ENCODE measurements at regions of chr6 and their contacts with region 1.

Region 1: DNA sequence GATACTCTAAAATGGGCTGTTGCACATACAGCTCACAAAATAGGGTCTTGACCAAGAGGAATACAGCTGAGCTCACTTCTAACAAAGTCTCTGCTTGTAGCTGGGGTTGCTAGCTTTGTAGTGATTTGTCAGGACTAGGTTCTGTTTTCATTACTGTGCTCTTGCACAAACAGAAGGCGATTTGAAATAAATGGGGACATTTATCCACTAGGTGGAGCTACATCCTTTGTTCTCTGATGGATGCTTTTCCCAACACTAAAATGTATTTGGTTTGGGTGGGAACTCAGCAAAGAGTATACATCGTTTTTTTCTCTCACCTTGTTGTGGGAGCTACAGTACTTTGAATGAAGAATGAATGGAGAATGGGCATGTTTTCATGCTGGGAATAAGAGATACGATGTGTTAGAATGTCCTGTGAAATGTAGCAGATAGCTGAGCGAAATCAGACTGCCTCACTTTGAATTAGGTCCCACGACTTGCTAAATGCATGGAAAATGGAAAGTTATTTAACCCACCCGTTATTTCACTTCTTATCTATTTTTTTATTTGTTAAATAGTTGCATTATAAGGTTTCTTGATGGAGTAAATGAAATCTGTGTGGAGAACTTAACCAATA is 494.7 kb upstream of the MAP3K7 start:
- DNase-seq: peak in 1 of 2 donors; percentile 8
- ATAC-seq: no peak
- H3K4me3 ChIP-seq: no peak overlapping the region
- H3K4me3 Mint-ChIP-seq: no peak overlapping the region
- H3K27ac ChIP-seq: no peak overlapping the region
- H3K27ac Mint-ChIP-seq: no peak overlapping the region
- H3K4me1 ChIP-seq: no peaks in the 10 kb centered on the region
- H3K4me1 Mint-ChIP-seq: no peaks in the 10 kb centered on the region
- H3K27me3 ChIP-seq: no peaks in the 10 kb centered on the region
- H3K27me3 Mint-ChIP-seq: peaks cover 0 to 3% of the 10 kb centered on the region in 2 donors
- CTCF ChIP-seq: peak; percentile 23

Region 2: GRCh38 chr6:91534614-91535013 is 453.1 kb after region 1 on chr6:
- intact Hi-C with region 1: no loop called
- DNase-seq: no peak
- ATAC-seq: no peak
- H3K4me3 ChIP-seq: no peak overlapping the region
- H3K4me3 Mint-ChIP-seq: no peak overlapping the region
- H3K27ac ChIP-seq: no peak overlapping the region
- H3K27ac Mint-ChIP-seq: no peak overlapping the region
- H3K4me1 ChIP-seq: no peaks in the 10 kb centered on the region
- H3K4me1 Mint-ChIP-seq: no peaks in the 10 kb centered on the region
- H3K27me3 ChIP-seq: no peaks in the 10 kb centered on the region
- H3K27me3 Mint-ChIP-seq: no peaks in the 10 kb centered on the region
- CTCF ChIP-seq: no peak

Region 3: GRCh38 chr6:92647625-92648024 is 1566.1 kb after region 1 on chr6:
- intact Hi-C with region 1: loop called (anchors 5 kb)
- DNase-seq: no peak
- ATAC-seq: no peak
- H3K4me3 ChIP-seq: no peak overlapping the region
- H3K4me3 Mint-ChIP-seq: no peak overlapping the region
- H3K27ac ChIP-seq: no peak overlapping the region
- H3K27ac Mint-ChIP-seq: no peak overlapping the region
- H3K4me1 ChIP-seq: no peaks in the 10 kb centered on the region
- H3K4me1 Mint-ChIP-seq: no peaks in the 10 kb centered on the region
- H3K27me3 ChIP-seq: no peaks in the 10 kb centered on the region
- H3K27me3 Mint-ChIP-seq: no peaks in the 10 kb centered on the region
- CTCF ChIP-seq: no peak

Measured in natural killer cell (primary cell).